SK-N-SH (cell line): ENCODE measurements at regions of chr17 and their contacts with region 1.

Region 1: DNA sequence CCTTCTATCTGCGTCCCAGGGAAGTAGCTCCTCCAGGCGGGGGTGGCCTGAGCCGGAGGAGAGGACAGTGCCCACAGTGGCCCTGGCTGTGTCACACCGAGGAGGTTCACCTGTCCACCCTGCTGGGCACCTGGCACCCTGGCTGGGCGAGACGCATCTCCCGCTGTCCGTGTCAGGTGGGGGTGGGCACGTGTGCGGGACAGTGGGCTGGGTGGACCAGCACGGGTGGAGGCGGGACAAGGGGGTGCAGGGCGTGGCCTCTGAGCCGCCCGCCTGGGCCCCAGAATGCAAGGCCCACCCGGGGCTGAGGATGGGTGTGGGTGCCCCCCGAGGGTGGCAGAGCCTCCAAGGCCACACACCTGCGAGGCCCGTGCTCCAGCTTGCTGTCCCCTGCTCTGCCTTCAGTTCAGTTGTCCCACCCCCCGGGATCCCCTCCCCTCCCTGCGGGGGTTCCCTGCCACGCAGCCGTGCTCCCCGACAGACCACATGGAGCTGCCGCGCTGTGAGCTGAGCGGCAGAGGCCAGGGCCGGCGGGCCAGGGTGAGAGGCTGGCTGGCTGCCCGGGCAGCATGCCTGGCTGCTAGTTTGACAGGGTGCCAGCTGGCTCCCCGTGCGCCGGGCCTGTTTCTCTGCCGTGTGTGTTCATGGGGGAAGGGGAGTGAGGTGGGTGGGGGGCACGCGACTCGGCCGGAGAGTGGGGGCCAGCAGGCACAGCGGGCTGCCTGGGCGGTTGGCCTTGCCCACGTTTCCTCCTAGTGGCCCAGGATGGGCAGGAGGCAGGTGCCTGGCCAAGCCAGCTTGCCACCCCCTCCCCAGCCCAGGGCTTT is 33.9 kb downstream of the BAHCC1 start:
- DNase-seq: peak; percentile 97
- H3K4me3 ChIP-seq: peak overlapping the region in 1 of 2 experiments; percentile 4; a peak in 1 of 4 replicates
- H3K27ac ChIP-seq: peak overlapping the region; percentile 15 to 78; a peak in 3 of 4 replicates
- H3K4me1 ChIP-seq: peaks cover 21 to 51% of the 10 kb centered on the region in 2 experiments; a peak in 3 of 4 replicates
- H3K27me3 ChIP-seq: no peaks in the 10 kb centered on the region
- CTCF ChIP-seq: no peak
- EP300 ChIP-seq: peak in 1 of 2 experiments; percentile 82; a peak in 3 of 4 replicates
- RAD21 ChIP-seq: no peak

Region 2: DNA sequence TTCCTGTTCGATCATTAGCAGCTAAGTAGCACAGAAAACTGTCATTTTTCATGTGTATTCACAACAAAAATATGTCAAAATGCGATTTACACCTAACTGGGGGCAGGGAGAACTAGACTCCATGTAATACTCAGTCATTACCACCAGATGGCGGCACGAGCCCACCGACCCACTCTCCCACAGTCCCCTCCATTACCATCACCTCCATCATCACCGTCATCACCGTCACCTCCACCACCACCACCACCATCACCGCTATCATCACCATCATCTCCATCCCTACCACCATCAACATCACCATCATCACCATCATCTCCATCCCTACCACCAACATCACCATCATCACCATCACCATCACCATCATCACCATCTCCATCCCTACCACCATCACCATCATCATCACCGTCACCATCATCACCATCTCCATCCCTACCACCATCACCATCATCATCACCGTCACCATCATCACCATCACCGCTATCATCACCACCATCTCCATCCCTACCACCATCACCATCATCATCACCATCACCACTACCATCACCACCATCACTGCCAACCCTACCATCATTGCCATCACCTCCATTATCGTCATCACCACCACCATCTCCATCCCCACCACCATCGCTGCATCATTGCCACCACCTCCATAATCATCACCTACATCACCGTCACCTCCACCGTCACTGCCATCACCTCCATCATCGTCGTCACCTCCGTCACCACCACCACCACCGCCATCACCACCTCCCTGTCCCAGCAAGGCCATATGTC is 175.6 kb before region 1 on chr17:
- CTCF ChIA-PET with region 1: interaction called, 15 read pairs
- POLR2A ChIA-PET with region 1: interaction called, 3 read pairs
- DNase-seq: peak; percentile 92
- H3K4me3 ChIP-seq: peak overlapping the region in 1 of 2 experiments; percentile 21; a peak in 1 of 4 replicates
- H3K27ac ChIP-seq: no peak overlapping the region; a peak in 1 of 4 replicates
- H3K4me1 ChIP-seq: peaks cover 0 to 38% of the 10 kb centered on the region in 2 experiments; a peak in 1 of 4 replicates
- H3K27me3 ChIP-seq: no peaks in the 10 kb centered on the region
- CTCF ChIP-seq: peak; percentile 92
- EP300 ChIP-seq: no peak
- RAD21 ChIP-seq: peak; percentile 99

Region 3: DNA sequence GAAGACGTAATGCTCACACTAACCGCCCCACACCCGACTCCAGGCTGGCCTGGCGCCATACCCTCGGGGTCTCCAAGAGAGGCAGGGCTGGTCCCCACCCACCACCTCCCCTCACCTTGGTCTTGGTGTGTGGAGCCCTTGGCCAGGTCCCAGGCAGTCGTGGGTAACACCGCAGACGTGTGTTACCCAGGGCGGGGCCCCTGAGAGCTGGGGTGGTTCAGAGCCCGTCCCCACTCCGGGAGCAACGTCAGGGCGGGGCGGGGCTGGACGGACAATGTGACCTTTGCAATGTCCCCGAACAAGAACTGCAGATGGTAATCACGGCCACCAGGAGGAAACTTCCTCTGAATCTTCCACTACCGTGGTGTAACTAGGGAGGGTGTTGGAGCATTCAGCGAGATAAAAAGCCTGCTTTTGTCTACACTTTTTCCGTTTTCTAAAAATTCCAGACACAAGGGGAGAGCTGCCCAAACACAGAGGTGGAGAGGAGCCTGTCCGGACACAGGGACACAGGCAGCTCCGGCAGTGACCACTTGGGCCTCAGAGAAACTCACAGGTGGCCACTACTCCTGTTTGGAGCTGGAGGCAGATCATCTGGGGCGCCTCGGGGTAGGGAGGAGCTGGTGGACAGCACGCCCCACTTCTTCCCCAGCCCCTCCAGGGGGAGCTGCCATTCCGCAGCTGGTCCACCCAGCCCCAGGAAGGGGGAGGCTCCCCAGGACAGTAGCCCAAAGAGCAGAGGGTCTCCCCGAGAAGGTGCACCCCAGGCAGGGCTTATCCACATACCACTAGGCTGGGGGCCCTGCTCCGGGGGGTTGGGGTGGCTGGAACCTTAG is 119.9 kb before region 1 on chr17:
- CTCF ChIA-PET with region 1: interaction called, 26 read pairs
- POLR2A ChIA-PET with region 1: interaction called, 9 read pairs
- DNase-seq: peak; percentile 84
- H3K4me3 ChIP-seq: no peak overlapping the region
- H3K27ac ChIP-seq: peak overlapping the region in 1 of 2 experiments; percentile 99; a peak in 2 of 4 replicates
- H3K4me1 ChIP-seq: peaks cover 0 to 87% of the 10 kb centered on the region in 2 experiments; a peak in 2 of 4 replicates
- H3K27me3 ChIP-seq: peaks cover 6% of the 10 kb centered on the region; the same call in 1 of the 2 replicates
- CTCF ChIP-seq: peak; percentile 50
- EP300 ChIP-seq: no peak
- RAD21 ChIP-seq: peak; percentile 46

Region 4: GRCh38 chr17:81328978-81329919 is 99.9 kb before region 1 on chr17:
- CTCF ChIA-PET with region 1: interaction called, 15 read pairs
- POLR2A ChIA-PET with region 1: interaction called, 4 read pairs
- DNase-seq: peak; percentile 91
- H3K4me3 ChIP-seq: no peak overlapping the region
- H3K27ac ChIP-seq: peak overlapping the region; percentile 63 to 97
- H3K4me1 ChIP-seq: peaks cover 19 to 80% of the 10 kb centered on the region in 2 experiments
- H3K27me3 ChIP-seq: no peaks in the 10 kb centered on the region
- CTCF ChIP-seq: no peak
- EP300 ChIP-seq: peak; percentile 71 to 87; a peak in 3 of 4 replicates
- RAD21 ChIP-seq: peak; percentile 15; the same call in 1 of the 2 replicates

Region 5: GRCh38 chr17:81354954-81355347 is 74.2 kb before region 1 on chr17:
- CTCF ChIA-PET with region 1: no interaction called
- POLR2A ChIA-PET with region 1: no interaction called
- DNase-seq: no peak
- H3K4me3 ChIP-seq: no peak overlapping the region
- H3K27ac ChIP-seq: no peak overlapping the region
- H3K4me1 ChIP-seq: peaks cover 0 to under 1% of the 10 kb centered on the region in 2 experiments; a peak in 1 of 4 replicates
- H3K27me3 ChIP-seq: no peaks in the 10 kb centered on the region
- CTCF ChIP-seq: no peak
- EP300 ChIP-seq: no peak
- RAD21 ChIP-seq: no peak

Region 6: DNA sequence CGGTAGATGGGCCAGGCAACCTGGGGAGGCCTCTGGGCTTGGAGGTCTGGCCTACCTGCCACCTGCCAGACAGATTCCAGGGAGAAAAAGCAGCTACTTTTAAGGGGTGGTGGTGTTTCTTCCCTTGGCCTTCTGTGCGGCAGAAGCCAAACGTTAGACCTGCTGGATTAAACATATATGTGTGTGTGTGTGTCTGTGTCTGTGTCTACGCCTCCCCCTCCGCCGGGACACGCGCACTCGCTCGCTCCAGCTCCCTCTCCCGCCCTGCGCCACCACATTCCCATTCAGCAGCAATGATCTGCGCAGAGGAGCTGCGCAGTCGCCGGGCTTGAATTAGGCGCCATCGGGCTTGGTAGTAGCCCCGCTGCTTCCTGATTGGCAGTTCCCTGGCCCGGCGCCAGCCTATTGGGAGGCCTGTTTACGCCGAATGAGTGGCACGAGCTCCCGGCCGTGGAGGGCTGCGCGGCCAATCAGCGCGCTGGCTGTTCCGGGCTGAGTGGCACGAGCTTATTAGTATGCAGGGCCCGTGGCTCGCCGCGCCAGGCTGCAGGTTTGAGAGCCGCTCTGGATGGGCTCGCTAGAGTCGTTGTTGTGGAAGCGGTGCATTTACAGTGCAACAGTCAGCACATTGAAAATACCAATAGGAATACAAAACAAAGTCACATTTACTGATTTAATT is 34.1 kb before region 1 on chr17 and contains the start of gene BAHCC1:
- CTCF ChIA-PET with region 1: interaction called, 104 read pairs
- POLR2A ChIA-PET with region 1: interaction called, 28 read pairs
- DNase-seq: peak; percentile 97
- H3K4me3 ChIP-seq: peak within 1 kb of the TSS; percentile 60 to 80
- H3K27ac ChIP-seq: peak within 1 kb of the TSS; percentile 83 to 89
- H3K4me1 ChIP-seq: peaks cover 31 to 68% of the 10 kb centered on the region in 2 experiments
- H3K27me3 ChIP-seq: no peaks in the 10 kb centered on the region
- CTCF ChIP-seq: no peak
- EP300 ChIP-seq: peak in 1 of 2 experiments; percentile 51; a peak in 1 of 4 replicates
- RAD21 ChIP-seq: no peak; the same call in 1 of the 2 replicates
- polyA plus RNA-seq, gene BAHCC1: 3.6 and 6.4 TPM in 2 replicates

Region 7: GRCh38 chr17:81412490-81413093 is 16.6 kb before region 1 on chr17:
- CTCF ChIA-PET with region 1: interaction called, 41 read pairs
- POLR2A ChIA-PET with region 1: interaction called, 5 read pairs
- DNase-seq: no peak
- H3K4me3 ChIP-seq: no peak overlapping the region
- H3K27ac ChIP-seq: no peak overlapping the region
- H3K4me1 ChIP-seq: peaks cover 10 to 13% of the 10 kb centered on the region in 2 experiments; a peak in 3 of 4 replicates
- H3K27me3 ChIP-seq: no peaks in the 10 kb centered on the region
- CTCF ChIP-seq: no peak
- EP300 ChIP-seq: no peak
- RAD21 ChIP-seq: no peak